Activated naive CD4-positive, alpha-beta T cell treated with anti-CD3 and anti-CD28 coated beads for 36 hours (primary cell): ENCODE measurements at regions of chr2 and their contacts with region 1.

Region 1: DNA sequence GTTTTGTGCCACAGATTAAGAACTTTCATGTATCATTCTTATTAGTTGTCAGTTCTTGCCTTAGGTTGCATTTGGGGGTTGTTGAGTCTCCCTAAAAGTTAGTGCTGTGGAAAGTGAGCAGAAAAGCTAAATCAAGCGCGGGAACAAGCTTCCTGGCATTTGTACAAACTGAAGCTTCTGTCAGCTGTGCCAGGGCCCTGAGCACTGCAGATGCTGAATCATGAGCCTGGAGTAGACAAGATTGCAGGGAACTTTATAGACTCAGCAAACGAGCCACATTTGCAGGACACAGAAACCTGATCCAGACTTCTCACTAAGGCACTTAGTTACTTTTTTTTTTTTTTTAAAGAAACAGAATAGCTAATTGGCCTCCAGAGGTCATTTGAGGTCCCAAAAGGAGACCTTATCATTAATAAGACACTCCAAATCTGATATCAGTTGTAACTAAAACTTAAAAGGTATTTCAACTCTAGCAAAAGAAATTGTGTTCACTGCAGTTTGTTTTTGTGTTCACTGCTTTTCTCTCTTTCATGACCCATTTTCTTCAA is 88.7 kb downstream of the ADAM23 start:
- DNase-seq: no peak
- H3K4me3 Mint-ChIP-seq: no peak overlapping the region
- H3K27ac Mint-ChIP-seq: no peak overlapping the region
- H3K4me1 Mint-ChIP-seq: peaks cover 13% of the 10 kb centered on the region
- H3K27me3 Mint-ChIP-seq: peaks cover 13% of the 10 kb centered on the region

Region 2: DNA sequence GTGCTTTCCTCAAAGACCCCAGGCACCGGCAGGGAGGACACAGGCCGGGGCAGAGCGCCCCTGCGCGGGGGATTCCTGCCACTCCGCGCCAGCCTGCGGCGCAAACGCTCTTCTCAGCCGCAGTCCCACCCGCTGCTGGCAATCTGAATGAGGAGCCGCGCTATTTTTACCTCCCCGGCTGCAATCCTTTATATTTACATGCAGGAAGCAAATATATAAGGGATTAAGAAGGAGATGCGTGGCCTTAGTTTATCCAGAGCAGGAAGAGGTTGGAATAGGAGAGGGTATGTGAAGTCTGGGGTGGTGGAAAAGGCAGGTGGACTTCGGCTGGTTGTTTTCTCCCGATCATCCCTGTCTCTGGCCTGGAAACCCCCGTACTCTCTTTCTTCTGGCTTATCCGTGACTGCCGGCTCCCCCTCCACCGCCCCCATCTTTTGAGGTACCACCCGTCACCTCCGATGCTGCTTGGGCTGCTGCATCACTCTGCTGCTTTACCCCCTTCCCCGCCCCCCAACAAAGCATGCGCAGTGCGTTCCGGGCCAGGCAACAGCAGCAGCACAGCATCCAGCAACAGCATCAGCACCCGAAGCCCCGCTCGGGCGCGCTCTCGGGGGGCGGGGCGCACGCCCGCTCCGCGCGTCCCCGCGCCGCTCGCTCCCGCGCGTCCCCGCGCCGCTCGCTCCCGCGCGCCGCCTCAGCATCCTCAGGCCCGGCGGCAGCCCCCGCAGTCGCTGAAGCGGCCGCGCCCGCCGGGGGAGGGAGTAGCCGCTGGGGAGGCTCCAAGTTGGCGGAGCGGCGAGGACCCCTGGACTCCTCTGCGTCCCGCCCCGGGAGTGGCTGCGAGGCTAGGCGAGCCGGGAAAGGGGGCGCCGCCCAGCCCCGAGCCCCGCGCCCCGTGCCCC is 89.0 kb before region 1 on chr2 and contains the start of gene ADAM23:
- CTCF ChIA-PET with region 1: no interaction called
- intact Hi-C with region 1: loop called (anchors 5 kb)
- DNase-seq: peak; percentile 42
- H3K4me3 Mint-ChIP-seq: peak within 1 kb of the TSS; percentile 76
- H3K27ac Mint-ChIP-seq: no peak within 1 kb of the TSS
- H3K4me1 Mint-ChIP-seq: peaks cover 13% of the 10 kb centered on the region
- H3K27me3 Mint-ChIP-seq: peaks cover 59% of the 10 kb centered on the region
- total RNA-seq, gene ADAM23: 0.10 to 0.42 TPM

Region 3: DNA sequence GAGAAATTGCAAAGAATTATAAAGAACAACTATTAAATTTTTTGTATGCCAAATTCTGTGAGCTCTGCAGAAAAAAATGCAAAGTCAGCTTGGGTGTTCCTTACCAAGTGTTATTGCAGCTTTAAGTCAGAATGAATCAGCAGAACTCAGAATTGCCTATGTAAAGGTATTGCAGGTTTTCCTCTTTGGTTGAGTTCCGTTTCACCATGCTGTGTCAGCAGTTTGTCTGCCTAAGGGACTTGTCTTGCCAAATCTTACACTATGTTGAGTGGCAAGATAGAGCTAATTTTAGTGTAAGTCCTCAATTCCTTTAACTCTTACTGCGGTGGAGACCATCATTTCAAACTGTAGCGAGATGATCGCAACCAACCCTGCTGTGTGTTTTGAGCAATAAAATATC is 49.9 kb before region 1 on chr2:
- CTCF ChIA-PET with region 1: no interaction called
- intact Hi-C with region 1: no loop called
- DNase-seq: no peak
- H3K4me3 Mint-ChIP-seq: no peak overlapping the region
- H3K27ac Mint-ChIP-seq: no peak overlapping the region
- H3K4me1 Mint-ChIP-seq: no peaks in the 10 kb centered on the region
- H3K27me3 Mint-ChIP-seq: peaks cover 15% of the 10 kb centered on the region

Region 4: GRCh38 chr2:206665251-206665650 is 133.2 kb after region 1 on chr2:
- CTCF ChIA-PET with region 1: no interaction called
- intact Hi-C with region 1: no loop called
- DNase-seq: no peak
- H3K4me3 Mint-ChIP-seq: no peak overlapping the region
- H3K27ac Mint-ChIP-seq: no peak overlapping the region
- H3K4me1 Mint-ChIP-seq: no peaks in the 10 kb centered on the region
- H3K27me3 Mint-ChIP-seq: peaks cover 15% of the 10 kb centered on the region

Region 5: GRCh38 chr2:206765242-206766056 is 233.4 kb after region 1 on chr2 and contains the starts of genes FASTKD2 and MDH1B:
- CTCF ChIA-PET with region 1: no interaction called
- intact Hi-C with region 1: no loop called
- DNase-seq: peak; percentile 91
- H3K4me3 Mint-ChIP-seq: peak within 1 kb of the TSS; percentile 89
- H3K27ac Mint-ChIP-seq: peak within 1 kb of the TSS; percentile 95
- H3K4me1 Mint-ChIP-seq: peaks cover 35% of the 10 kb centered on the region
- H3K27me3 Mint-ChIP-seq: no peaks in the 10 kb centered on the region
- total RNA-seq, gene FASTKD2: 21.4 to 22.8 TPM
- total RNA-seq, gene MDH1B: 0.86 TPM